ENCODE measurements at regions of chr7 and their contacts with region 1.

Region 1: GRCh38 chr7:152336754-152337368 is 98.9 kb downstream of the KMT2C start:
- DNase-seq: peak; percentile 49
- H3K4me3 ChIP-seq: no peak overlapping the region
- H3K27ac ChIP-seq: no peak overlapping the region
- H3K4me1 ChIP-seq: no peaks in the 10 kb centered on the region
- H3K27me3 ChIP-seq: no peaks in the 10 kb centered on the region
- CTCF ChIP-seq: peak; percentile 41

Region 2: GRCh38 chr7:152176797-152177196 is 160.1 kb before region 1 on chr7:
- intact Hi-C with region 1: no loop called
- DNase-seq: no peak
- H3K4me3 ChIP-seq: no peak overlapping the region
- H3K27ac ChIP-seq: no peak overlapping the region
- H3K4me1 ChIP-seq: no peaks in the 10 kb centered on the region
- H3K27me3 ChIP-seq: no peaks in the 10 kb centered on the region
- CTCF ChIP-seq: no peak

Region 3: DNA sequence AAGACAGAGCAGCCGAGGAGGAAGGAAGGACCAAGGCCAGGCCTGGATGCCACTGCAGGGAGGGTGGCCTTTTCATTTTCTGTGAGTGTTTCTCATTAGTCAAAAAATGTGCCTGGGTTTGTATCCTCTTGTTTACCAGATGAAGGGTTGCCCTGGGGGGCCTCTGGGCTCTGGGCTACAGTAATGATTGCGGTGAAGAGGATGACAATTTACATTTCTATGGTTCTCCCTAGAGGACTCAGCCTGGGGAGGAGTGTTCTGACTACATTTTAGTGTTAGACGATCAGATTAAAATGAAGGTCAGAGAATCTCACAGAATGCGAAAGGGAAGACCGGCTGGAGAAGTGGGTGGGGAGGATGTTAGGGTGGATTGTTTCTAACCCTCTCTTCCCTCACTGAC is 206.9 kb after region 1 on chr7:
- intact Hi-C with region 1: no loop called
- DNase-seq: no peak
- H3K4me3 ChIP-seq: no peak overlapping the region
- H3K27ac ChIP-seq: no peak overlapping the region
- H3K4me1 ChIP-seq: no peaks in the 10 kb centered on the region
- H3K27me3 ChIP-seq: no peaks in the 10 kb centered on the region
- CTCF ChIP-seq: no peak

Region 4: DNA sequence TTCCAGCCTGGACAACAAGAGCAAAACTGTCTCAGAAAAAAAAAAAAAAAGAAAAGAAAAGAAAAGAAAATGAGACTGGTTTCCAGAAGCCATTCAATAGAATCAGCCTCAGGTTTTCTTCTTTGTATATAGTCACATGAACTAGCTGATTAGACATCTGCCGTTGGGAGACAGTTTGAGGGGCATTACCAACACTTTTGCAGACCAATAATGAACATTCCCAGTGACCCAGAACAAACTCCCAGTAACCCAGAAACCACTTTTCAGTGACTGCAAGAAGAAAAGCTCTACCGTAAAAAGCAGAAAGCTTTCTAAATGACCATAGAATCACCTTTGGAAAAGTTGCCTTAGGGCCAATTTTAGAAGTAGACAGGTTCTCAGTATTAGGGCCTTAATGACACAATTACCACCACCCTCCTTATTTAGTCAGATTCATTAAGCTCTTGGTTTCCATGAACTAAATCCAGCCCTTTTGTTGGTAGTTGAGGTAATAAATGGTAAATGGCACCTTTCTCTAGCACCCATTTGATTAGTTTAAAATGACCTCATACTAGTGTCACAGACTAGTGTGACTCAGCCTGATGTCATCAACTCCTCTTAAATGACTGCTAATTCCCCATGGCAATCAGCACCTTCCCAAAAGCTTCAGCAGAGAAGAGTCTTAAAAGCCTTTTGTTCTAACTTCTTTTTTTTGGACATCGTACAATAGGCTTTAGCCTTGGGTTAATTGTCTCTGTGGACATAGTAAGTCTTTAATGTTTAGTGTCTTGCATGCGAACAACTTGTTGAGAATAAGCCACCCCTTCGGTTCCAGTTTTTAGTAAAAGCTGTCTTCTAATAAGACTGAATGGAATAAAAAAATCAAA is 372.7 kb after region 1 on chr7:
- intact Hi-C with region 1: loop called (anchors 5 kb)
- DNase-seq: no peak
- H3K4me3 ChIP-seq: no peak overlapping the region
- H3K27ac ChIP-seq: no peak overlapping the region
- H3K4me1 ChIP-seq: no peaks in the 10 kb centered on the region
- H3K27me3 ChIP-seq: no peaks in the 10 kb centered on the region
- CTCF ChIP-seq: no peak